ENCODE measurements at regions of chr17 and their contacts with region 1.

Region 1: GRCh38 chr17:56779898-56780733 is 53.6 kb downstream of the C17orf67 start:
- DNase-seq: peak; percentile 85
- ATAC-seq: peak; percentile 96
- H3K4me3 ChIP-seq: peak overlapping the region; percentile 3 to 57 (median 48)
- H3K4me3 Mint-ChIP-seq: peak overlapping the region; percentile 88
- H3K27ac ChIP-seq: no peak overlapping the region
- H3K27ac Mint-ChIP-seq: peak overlapping the region; percentile 57
- H3K4me1 ChIP-seq: peaks cover 12% of the 10 kb centered on the region in 2 donors
- H3K4me1 Mint-ChIP-seq: peaks cover 12% of the 10 kb centered on the region
- H3K27me3 ChIP-seq: peaks cover 0 to 20% (median 4%) of the 10 kb centered on the region in 4 experiments
- H3K27me3 Mint-ChIP-seq: peaks cover 42% of the 10 kb centered on the region
- CTCF ChIP-seq: peak; percentile 99

Region 2: GRCh38 chr17:56715613-56716357 is 64.3 kb before region 1 on chr17:
- CTCF ChIA-PET with region 1: interaction called, 13 read pairs
- POLR2A ChIA-PET with region 1: no interaction called
- intact Hi-C with region 1: no loop called
- DNase-seq: peak; percentile 77
- ATAC-seq: peak; percentile 88
- H3K4me3 ChIP-seq: no peak overlapping the region
- H3K4me3 Mint-ChIP-seq: no peak overlapping the region
- H3K27ac ChIP-seq: no peak overlapping the region
- H3K27ac Mint-ChIP-seq: no peak overlapping the region
- H3K4me1 ChIP-seq: peaks cover 3 to 5% of the 10 kb centered on the region in 2 donors
- H3K4me1 Mint-ChIP-seq: peaks cover 4% of the 10 kb centered on the region
- H3K27me3 ChIP-seq: no peaks in the 10 kb centered on the region
- H3K27me3 Mint-ChIP-seq: no peaks in the 10 kb centered on the region
- CTCF ChIP-seq: peak; percentile 86